Gastrocnemius medialis (tissue), 4 donors: ENCODE measurements at regions of chr1 and their contacts with region 1.

Region 1: GRCh38 chr1:205631727-205632373 is at the start of gene ELK4:
- DNase-seq: peak; percentile 96 to 97
- ATAC-seq: peak; percentile 89 to 94
- H3K4me3 ChIP-seq: peak within 1 kb of the TSS; percentile 65 to 90 (median 78)
- H3K27ac ChIP-seq: peak within 1 kb of the TSS; percentile 93 to 97 (median 96)
- H3K4me1 ChIP-seq: peaks cover 43% of the 10 kb centered on the region in 2 donors
- H3K27me3 ChIP-seq: no peaks in the 10 kb centered on the region
- CTCF ChIP-seq: peak; percentile 54 to 78 (median 68)
- POLR2A ChIP-seq: peak; percentile 98
- total RNA-seq, gene ELK4: 17.3 to 24.2 (median 20.1) TPM

Region 2: DNA sequence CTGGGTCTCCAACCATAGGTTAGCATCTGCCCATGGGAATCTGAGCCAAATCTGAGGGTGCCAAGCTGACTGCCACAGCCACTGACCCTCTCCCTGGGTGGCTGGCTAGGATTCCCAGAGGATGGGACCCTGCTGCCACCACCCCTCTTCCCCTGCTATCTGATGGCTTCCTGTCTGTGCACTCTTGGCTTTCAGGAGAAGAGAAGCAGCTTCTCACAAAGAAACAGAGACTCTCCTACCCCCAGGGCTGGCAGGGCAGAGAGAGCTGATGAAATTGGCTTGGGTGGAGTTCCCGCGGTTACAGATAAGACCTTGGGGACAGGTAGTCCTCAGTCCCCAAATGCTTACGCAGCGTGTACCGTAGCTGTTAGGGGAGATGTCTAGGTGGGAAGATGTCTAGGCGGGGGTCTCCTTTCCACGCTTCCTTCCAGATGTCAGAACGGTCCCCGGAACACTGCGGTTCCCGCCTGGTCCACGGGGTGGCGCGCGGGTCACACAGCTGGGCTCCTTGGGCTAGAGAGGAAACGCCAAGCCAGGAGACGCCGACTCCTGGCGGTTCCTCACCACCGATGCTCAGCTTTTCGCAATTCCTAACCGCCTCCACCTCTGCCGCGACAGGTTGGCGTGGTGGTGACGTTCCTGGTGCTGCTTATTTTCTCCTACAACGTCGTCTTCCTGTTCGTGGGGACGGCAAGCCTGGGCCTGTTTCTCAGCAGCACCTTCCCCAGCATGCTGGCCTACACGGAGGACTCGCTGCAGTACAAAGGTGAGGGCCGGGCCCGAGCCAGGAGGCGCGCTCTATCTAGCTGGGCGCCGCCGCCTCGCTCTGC is 40.1 kb before region 1 on chr1:
- in situ Hi-C with region 1: no loop called
- intact Hi-C with region 1: loop called (anchors 1 kb)
- DNase-seq: peak; percentile 58 to 74
- ATAC-seq: peak; percentile 80 to 94
- H3K4me3 ChIP-seq: peak overlapping the region; percentile 38 to 76 (median 46)
- H3K27ac ChIP-seq: no peak overlapping the region
- H3K4me1 ChIP-seq: no peaks in the 10 kb centered on the region
- H3K27me3 ChIP-seq: no peaks in the 10 kb centered on the region
- CTCF ChIP-seq: peak; percentile 98 to 99 (median 99)
- POLR2A ChIP-seq: no peak

Region 3: DNA sequence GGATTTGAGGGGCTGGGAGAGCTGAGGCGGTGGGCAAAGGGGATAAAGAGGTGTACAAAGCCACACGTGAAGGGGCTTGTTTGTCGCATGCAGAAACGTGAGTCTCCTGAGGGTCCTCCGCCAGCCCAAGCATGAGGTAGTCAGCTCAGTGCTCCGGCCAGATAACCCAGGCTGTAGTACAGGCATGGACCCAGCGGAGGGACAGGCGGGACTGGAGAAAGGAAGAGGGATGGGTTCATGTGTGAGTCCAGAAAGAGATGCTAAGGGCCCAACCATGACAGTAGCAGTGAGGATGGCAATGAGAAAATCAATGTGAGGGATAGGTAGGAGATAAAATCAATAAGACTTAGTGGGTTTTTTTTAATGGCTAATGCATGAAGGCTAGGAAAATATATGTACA is 13.7 kb after region 1 on chr1:
- in situ Hi-C with region 1: no loop called
- intact Hi-C with region 1: loop called (anchors 1 kb)
- DNase-seq: no peak
- ATAC-seq: no peak
- H3K4me3 ChIP-seq: no peak overlapping the region
- H3K27ac ChIP-seq: no peak overlapping the region
- H3K4me1 ChIP-seq: peaks cover 11 to 17% of the 10 kb centered on the region in 2 donors
- H3K27me3 ChIP-seq: no peaks in the 10 kb centered on the region
- CTCF ChIP-seq: no peak
- POLR2A ChIP-seq: no peak

Region 4: GRCh38 chr1:205729945-205730610 is 98.2 kb after region 1 on chr1:
- in situ Hi-C with region 1: no loop called
- intact Hi-C with region 1: no loop called
- DNase-seq: no peak
- ATAC-seq: no peak
- H3K4me3 ChIP-seq: no peak overlapping the region
- H3K27ac ChIP-seq: no peak overlapping the region
- H3K4me1 ChIP-seq: peaks cover 14 to 19% of the 10 kb centered on the region in 2 donors
- H3K27me3 ChIP-seq: no peaks in the 10 kb centered on the region
- CTCF ChIP-seq: no peak
- POLR2A ChIP-seq: no peak

Region 5: GRCh38 chr1:205749234-205750137 is 117.6 kb after region 1 on chr1:
- in situ Hi-C with region 1: no loop called
- intact Hi-C with region 1: loop called (anchors 2 kb)
- DNase-seq: peak; percentile 91 to 94
- ATAC-seq: peak; percentile 76 to 77
- H3K4me3 ChIP-seq: peak overlapping the region; percentile 76 to 88 (median 82)
- H3K27ac ChIP-seq: peak overlapping the region; percentile 93 to 97 (median 96)
- H3K4me1 ChIP-seq: peaks cover 34 to 39% of the 10 kb centered on the region in 2 donors
- H3K27me3 ChIP-seq: no peaks in the 10 kb centered on the region
- CTCF ChIP-seq: peak in 1 of 5 experiments; percentile 18
- POLR2A ChIP-seq: peak; percentile 95